Activated B cell treated with CpG ODN at 0.5 μM for 24 hours (primary cell): ENCODE measurements at regions of chr7 and their contacts with region 1.

Region 1: GRCh38 chr7:2709553-2710285 is 21.7 kb downstream of the AMZ1 start:
- DNase-seq: peak; percentile 81
- ATAC-seq: peak; percentile 79
- H3K4me3 Mint-ChIP-seq: peak overlapping the region; percentile 88
- H3K27ac Mint-ChIP-seq: peak overlapping the region; percentile 94
- H3K4me1 Mint-ChIP-seq: peaks cover 41% of the 10 kb centered on the region
- H3K27me3 Mint-ChIP-seq: no peaks in the 10 kb centered on the region
- CTCF ChIP-seq: peak; percentile 75

Region 2: GRCh38 chr7:2477447-2478398 is 232.0 kb before region 1 on chr7:
- CTCF ChIA-PET with region 1: interaction called, 4 read pairs
- POLR2A ChIA-PET with region 1: interaction called, 6 read pairs
- intact Hi-C with region 1: loop called (anchors 1 kb)
- DNase-seq: peak; percentile 66
- ATAC-seq: peak; percentile 98
- H3K4me3 Mint-ChIP-seq: no peak overlapping the region
- H3K27ac Mint-ChIP-seq: no peak overlapping the region
- H3K4me1 Mint-ChIP-seq: peaks cover 11% of the 10 kb centered on the region
- H3K27me3 Mint-ChIP-seq: no peaks in the 10 kb centered on the region
- CTCF ChIP-seq: peak; percentile 68

Region 3: DNA sequence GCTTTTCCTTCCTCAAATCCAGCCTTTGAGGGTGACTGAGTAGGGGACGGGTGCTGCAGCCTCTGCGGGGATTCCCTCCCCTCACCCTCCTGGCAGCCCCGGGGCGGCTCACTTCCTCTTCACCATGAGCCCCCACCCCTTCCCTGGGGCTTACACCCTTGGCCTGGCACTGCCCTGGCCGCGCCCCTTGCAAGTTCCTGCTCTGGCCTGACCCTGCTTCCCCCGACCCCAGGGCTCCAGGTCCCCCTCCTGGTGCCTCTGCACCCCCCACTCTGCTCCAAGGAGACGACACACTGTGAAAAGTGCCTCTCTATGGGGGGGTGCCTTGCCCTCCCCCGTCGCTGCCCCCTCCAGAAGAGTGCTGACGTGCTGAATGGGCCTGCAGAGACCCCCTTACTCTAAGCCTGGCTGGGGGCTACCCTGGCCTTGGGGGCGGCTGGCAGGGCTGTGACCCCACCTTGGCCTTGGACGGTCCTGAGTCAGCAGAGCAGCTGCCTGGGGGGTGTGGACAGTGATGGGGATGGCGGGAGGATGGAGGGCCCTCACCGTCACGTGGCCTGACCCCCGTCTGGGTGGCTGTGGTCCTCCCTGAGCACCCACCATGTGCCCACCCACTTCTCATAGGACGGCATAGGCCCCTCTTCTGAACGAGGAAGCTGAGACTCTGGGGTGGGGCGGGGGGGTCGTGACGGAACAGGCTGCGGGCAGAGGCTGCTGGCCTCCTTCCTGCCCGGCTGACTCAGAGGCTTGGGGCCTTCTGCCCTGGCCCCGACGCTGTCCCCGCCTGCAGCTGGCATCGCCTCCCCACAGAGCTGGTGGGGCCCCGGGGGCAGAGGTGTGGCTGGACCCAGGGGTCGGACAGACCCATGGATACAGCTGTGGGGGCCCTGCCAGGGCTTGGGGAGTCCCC is 180.3 kb before region 1 on chr7:
- CTCF ChIA-PET with region 1: interaction called, 4 read pairs
- POLR2A ChIA-PET with region 1: interaction called, 22 read pairs
- intact Hi-C with region 1: no loop called
- DNase-seq: peak; percentile 79
- ATAC-seq: peak; percentile 68
- H3K4me3 Mint-ChIP-seq: peak overlapping the region; percentile 79
- H3K27ac Mint-ChIP-seq: peak overlapping the region; percentile 97
- H3K4me1 Mint-ChIP-seq: peaks cover 66% of the 10 kb centered on the region
- H3K27me3 Mint-ChIP-seq: no peaks in the 10 kb centered on the region
- CTCF ChIP-seq: no peak

Region 4: DNA sequence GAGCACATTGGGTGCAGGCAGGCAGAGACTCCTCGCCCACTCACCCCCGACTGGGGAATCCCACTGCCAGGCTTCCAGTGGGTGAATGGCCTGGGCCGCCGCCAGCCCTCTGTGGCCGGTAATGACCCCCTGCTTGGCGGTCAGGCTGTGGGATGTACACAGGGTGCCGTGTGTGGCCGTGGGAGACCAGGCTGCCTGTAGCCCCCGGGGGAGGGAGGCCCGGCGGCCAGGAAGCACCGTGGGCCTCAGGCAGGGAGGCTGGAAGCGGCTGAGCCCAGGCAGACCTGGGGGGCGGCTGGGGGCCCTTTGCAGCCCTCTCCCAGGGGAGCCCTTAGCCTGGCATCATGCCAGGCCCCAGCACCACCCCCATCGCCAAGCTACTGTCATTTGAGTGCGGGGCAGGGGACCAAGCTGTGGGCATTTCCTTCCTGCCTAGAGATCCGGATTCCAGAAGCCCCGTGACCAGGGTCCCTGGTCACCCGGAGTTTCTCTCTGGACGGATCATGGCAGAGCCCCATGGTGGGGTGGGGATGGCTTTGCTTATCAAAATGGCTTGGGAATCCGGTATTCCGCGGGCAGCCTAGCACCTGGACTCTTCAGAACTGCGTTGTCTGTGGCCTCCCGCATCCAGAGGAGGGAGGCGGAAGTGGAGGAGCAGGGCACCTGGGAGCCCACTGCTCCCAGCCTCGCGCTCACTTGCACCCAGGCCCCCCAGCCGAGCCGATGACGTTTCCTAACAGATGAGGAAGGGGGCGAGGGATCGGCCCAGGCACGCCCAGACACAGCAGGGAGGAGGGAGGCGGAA is 76.8 kb before region 1 on chr7:
- CTCF ChIA-PET with region 1: no interaction called
- POLR2A ChIA-PET with region 1: interaction called, 7 read pairs
- intact Hi-C with region 1: loop called (anchors 2 kb)
- DNase-seq: peak; percentile 45
- ATAC-seq: no peak
- H3K4me3 Mint-ChIP-seq: peak overlapping the region; percentile 87
- H3K27ac Mint-ChIP-seq: peak overlapping the region; percentile 70
- H3K4me1 Mint-ChIP-seq: peaks cover 42% of the 10 kb centered on the region
- H3K27me3 Mint-ChIP-seq: peaks cover under 1% of the 10 kb centered on the region
- CTCF ChIP-seq: no peak

Region 5: GRCh38 chr7:2680792-2681490 is 28.8 kb before region 1 on chr7:
- CTCF ChIA-PET with region 1: interaction called, 31 read pairs
- POLR2A ChIA-PET with region 1: interaction called, 14 read pairs
- intact Hi-C with region 1: no loop called
- DNase-seq: peak; percentile 55
- ATAC-seq: peak; percentile 73
- H3K4me3 Mint-ChIP-seq: no peak overlapping the region
- H3K27ac Mint-ChIP-seq: no peak overlapping the region
- H3K4me1 Mint-ChIP-seq: no peaks in the 10 kb centered on the region
- H3K27me3 Mint-ChIP-seq: peaks cover 2% of the 10 kb centered on the region
- CTCF ChIP-seq: no peak

Region 6: GRCh38 chr7:2720582-2721491 is 11.1 kb after region 1 on chr7:
- CTCF ChIA-PET with region 1: interaction called, 43 read pairs
- POLR2A ChIA-PET with region 1: interaction called, 17 read pairs
- intact Hi-C with region 1: loop called (anchors 1 kb)
- DNase-seq: peak; percentile 57
- ATAC-seq: peak; percentile 82
- H3K4me3 Mint-ChIP-seq: peak overlapping the region; percentile 26
- H3K27ac Mint-ChIP-seq: peak overlapping the region; percentile 84
- H3K4me1 Mint-ChIP-seq: peaks cover 56% of the 10 kb centered on the region
- H3K27me3 Mint-ChIP-seq: no peaks in the 10 kb centered on the region
- CTCF ChIP-seq: no peak

Region 7: DNA sequence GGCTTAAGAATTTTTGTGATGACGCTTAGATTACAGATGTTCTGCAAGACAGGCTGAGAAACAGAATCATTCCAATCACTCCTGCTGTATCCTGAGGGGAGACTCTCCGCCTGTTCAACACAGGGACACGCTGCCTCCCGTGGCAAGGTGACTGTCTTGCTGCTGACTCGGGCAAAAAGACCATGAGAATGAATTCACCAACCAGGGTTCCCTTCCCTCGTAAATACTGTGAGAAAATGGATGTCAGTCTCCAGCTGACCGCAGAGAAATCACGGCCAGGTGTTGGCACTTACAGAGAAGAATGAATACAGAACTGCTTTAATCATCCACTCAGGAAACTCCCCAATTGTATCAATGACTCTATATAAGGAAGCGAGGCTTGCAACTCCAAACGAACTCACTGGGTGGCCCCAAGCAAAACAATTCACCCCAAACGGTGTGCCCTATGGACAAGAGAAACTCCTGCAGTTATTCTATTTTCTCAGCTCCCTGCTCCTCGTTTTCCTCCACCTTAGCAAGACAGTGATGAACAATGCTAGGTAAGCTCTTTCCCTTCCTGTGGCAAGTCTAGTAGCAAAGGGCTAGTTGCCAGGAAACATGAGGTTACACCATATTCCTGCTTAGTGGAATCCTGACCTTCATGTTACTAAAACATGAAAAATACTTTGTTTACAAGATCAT is 111.6 kb after region 1 on chr7:
- CTCF ChIA-PET with region 1: interaction called, 10 read pairs
- POLR2A ChIA-PET with region 1: interaction called, 11 read pairs
- intact Hi-C with region 1: no loop called
- DNase-seq: no peak
- ATAC-seq: peak; percentile 67
- H3K4me3 Mint-ChIP-seq: peak overlapping the region; percentile 74
- H3K27ac Mint-ChIP-seq: peak overlapping the region; percentile 85
- H3K4me1 Mint-ChIP-seq: peaks cover 67% of the 10 kb centered on the region
- H3K27me3 Mint-ChIP-seq: no peaks in the 10 kb centered on the region
- CTCF ChIP-seq: no peak